Heart left ventricle (tissue), 16 donors: ENCODE measurements at regions of chr19 and their contacts with region 1.

Region 1: DNA sequence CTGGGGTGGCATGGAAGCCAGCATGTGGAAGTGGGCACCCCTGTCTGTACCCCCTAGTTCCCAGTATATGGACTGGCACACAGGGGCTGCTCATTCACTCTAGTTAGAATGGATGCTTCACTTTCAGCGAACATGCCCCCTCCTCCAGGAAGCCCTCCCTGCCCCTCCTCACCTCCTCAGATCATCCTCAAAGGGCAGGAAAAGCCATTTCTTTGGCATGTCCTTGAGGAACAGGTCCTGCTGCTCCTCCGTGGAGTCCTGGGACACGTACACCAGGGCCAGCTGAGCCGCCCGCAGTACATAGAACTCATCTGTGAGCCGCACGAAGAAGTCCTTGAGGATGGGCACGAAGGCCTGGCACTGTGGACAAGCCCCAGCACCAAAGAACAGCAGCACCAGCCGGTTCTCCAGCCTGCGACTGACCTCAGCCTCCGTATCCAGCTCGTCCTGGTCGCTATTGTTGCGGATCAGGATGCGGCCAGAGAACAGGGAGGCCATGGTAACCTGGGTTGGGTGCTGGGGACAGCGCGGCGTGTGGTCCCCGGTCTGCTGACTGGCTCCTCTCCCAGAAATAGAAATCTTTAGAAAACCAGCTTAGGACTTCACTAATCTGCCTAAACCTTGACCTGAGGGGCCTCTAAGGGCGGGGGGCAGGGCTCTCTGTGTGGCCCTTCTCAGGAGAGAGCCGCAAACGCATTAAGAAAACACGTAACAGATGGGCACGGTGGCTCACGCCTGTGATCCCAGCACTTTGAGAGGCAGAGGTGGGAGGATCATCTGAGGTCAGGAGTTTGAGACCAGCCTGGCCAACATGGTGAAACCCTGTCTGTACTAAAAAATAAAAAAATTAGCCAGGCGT is at the start of gene NXNL1:
- DNase-seq: peak in 1 of 5 donors; percentile 33
- ATAC-seq: no peak
- H3K4me3 ChIP-seq: no peak within 1 kb of the TSS
- H3K27ac ChIP-seq: no peak within 1 kb of the TSS
- H3K4me1 ChIP-seq: peaks cover 0 to 4% (median 0%) of the 10 kb centered on the region in 12 donors
- H3K27me3 ChIP-seq: peaks cover 10 to 55% (median 23%) of the 10 kb centered on the region in 9 donors
- CTCF ChIP-seq: no peak
- POLR2A ChIP-seq: no peak
- total RNA-seq, gene NXNL1: 0.32 to 1.1 (median 0.57) TPM in 4 of 9 donors, not detected in the others

Region 2: GRCh38 chr19:17260842-17261325 is 199.7 kb before region 1 on chr19:
- intact Hi-C with region 1: no loop called
- DNase-seq: peak; percentile 73 to 90 (median 83)
- ATAC-seq: peak; percentile 65 to 87 (median 84)
- H3K4me3 ChIP-seq: peak overlapping the region in 2 of 12 donors; percentile 9 to 17
- H3K27ac ChIP-seq: no peak overlapping the region
- H3K4me1 ChIP-seq: peaks cover 0 to 9% (median 5%) of the 10 kb centered on the region in 12 donors
- H3K27me3 ChIP-seq: no peaks in the 10 kb centered on the region
- CTCF ChIP-seq: peak; percentile 78 to 92 (median 88)
- POLR2A ChIP-seq: no peak

Region 3: DNA sequence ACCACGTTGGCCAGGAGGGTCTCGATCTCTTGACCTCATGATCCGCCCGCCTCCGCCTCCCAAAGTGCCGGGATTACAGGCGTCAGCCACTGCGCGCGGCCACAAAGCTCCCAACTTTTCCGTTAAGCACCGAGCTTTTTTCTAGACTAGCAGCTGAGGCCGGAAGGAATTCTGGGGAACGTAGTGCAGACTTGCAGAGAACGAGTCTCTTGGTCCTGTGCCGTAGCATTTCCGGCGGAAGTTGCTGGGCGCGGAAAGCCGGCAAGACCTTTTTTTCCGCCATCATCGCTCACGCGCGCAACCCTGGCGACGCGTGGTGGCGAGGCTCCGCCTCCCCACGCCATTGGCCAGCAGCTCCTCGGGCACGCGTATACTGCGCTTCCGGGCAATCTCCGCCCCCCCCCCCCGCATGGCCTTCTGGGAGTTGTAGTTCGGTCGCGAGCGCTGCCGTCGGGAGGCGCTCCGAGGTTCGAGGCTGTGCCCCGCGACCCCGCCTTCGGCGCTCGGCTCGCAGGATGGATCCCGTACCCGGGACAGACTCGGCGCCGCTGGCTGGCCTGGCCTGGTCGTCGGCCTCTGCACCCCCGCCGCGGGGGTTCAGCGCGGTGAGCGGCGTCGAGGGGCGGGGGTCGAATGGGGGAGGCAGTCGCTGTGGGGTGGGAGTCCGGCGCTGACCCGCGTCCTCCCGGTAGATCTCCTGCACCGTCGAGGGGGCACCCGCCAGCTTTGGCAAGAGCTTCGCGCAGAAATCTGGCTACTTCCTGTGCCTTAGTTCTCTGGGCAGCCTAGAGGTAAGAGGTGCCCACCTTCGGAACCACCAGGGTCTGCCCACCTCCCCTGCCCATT is 40.8 kb before region 1 on chr19 and contains the start of gene MVB12A:
- intact Hi-C with region 1: loop called in 1 of 10 experiments (anchors 5 kb)
- DNase-seq: peak; percentile 98 to 99 (median 98)
- ATAC-seq: peak; percentile 95 to 99 (median 98)
- H3K4me3 ChIP-seq: peak within 1 kb of the TSS; percentile 46 to 98 (median 88)
- H3K27ac ChIP-seq: peak within 1 kb of the TSS in 11 of 12 donors; percentile 61 to 90 (median 83)
- H3K4me1 ChIP-seq: peaks cover 0 to 20% (median 9%) of the 10 kb centered on the region in 12 donors
- H3K27me3 ChIP-seq: no peaks in the 10 kb centered on the region
- CTCF ChIP-seq: no peak
- POLR2A ChIP-seq: peak in 1 of 2 donors; percentile 60
- total RNA-seq, gene MVB12A: 11.8 to 41.5 (median 18.5) TPM

Region 4: DNA sequence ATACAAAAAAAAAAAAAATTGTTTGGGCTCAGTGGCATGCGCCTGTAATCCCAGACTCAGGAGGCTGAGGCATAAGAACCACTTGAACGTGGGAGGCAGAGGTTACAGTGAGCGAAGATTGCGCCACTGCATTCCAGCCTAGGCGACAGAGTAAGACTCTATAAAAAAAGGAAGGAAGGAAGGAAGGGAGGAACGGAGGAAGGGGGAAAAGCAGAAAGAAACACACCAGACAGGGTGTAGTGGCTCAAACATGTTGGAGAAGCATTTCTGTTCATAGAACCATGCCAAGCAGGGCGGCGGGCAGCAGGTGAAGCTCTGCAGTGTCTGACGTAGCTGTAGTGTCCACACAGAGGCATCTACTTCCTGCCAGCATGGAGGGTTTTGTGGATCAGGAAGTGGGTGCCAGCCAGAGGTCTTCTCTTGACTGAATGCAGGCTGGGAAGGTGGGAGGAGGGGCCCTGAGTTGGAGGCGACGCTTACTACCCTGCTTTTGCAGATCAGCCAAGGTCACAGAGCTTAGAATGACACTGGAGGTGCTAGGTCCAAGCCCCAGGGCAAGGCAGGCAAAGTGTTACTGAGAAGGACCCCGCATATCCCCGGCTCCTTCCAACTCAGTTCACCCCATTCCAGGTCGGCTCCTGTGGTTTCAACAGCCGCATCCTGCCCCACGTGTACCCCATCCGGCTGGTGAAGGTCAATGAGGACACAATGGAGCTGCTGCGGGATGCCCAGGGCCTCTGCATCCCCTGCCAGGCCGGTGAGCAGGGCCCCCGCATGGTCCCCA is 39.2 kb after region 1 on chr19:
- intact Hi-C with region 1: no loop called
- DNase-seq: peak in 1 of 5 donors; percentile 48
- ATAC-seq: peak in 3 of 4 donors; percentile 11 to 38 (median 20)
- H3K4me3 ChIP-seq: no peak overlapping the region
- H3K27ac ChIP-seq: peak overlapping the region in 9 of 12 donors; percentile 19 to 73 (median 43)
- H3K4me1 ChIP-seq: peaks cover 0 to 34% (median 15%) of the 10 kb centered on the region in 12 donors
- H3K27me3 ChIP-seq: no peaks in the 10 kb centered on the region
- CTCF ChIP-seq: no peak
- POLR2A ChIP-seq: no peak

Region 5: DNA sequence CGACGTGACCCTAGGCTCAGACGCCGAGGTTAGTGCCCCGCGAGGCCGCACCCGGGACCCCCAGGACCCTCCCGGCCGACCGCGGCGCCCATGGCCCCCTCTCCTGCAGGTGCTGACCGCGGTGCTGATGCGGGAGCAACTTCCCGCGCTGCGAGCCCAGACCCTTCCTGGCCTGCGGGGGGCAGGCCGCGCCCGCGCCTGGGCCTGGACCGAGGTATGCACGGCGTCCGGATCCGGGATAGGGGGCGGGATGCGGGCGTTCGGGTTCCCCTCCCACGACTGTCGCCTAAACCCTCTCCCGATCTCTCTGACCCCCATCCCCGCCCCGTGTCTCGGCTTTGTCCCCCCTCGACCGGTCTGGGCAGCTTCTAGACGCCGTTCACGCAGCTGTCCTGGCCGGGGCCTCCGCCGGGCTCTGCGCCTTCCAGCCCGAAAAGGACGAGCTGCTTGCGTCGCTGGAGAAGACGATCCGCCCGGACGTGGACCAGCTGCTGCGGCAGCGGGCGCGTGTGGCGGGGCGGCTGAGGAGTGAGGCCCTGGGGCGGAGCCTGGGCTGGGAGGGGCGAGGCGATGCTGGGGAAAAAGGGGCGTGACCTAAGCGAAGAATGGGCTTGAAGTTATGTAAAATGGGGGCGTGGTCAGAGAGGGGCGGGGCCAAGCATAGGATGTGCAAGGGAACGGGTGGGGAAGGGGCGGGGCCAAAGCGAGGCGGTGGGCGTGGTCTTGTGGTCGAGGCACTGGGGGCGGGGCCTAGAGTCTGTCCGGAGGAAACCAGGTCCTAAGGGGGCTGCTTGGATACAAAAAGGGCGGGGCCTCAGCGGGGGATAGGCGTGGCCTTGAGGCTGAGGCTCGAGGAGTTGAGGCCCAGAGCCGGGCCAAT is 78.9 kb after region 1 on chr19:
- intact Hi-C with region 1: no loop called
- DNase-seq: peak; percentile 92 to 97 (median 96)
- ATAC-seq: peak; percentile 82 to 96 (median 93)
- H3K4me3 ChIP-seq: peak overlapping the region; percentile 20 to 67 (median 56)
- H3K27ac ChIP-seq: peak overlapping the region in 11 of 12 donors; percentile 9 to 72 (median 59)
- H3K4me1 ChIP-seq: peaks cover 0 to 13% (median 11%) of the 10 kb centered on the region in 12 donors
- H3K27me3 ChIP-seq: peaks cover 0 to 13% (median 0%) of the 10 kb centered on the region in 9 donors
- CTCF ChIP-seq: peak in 11 of 12 donors; percentile 22 to 70 (median 59)
- POLR2A ChIP-seq: no peak